Activated CD4-positive, alpha-beta T cell treated with anti-CD3 and anti-CD28 coated beads for 36 hours (primary cell): ENCODE measurements at regions of chr7 and their contacts with region 1.

Region 1: DNA sequence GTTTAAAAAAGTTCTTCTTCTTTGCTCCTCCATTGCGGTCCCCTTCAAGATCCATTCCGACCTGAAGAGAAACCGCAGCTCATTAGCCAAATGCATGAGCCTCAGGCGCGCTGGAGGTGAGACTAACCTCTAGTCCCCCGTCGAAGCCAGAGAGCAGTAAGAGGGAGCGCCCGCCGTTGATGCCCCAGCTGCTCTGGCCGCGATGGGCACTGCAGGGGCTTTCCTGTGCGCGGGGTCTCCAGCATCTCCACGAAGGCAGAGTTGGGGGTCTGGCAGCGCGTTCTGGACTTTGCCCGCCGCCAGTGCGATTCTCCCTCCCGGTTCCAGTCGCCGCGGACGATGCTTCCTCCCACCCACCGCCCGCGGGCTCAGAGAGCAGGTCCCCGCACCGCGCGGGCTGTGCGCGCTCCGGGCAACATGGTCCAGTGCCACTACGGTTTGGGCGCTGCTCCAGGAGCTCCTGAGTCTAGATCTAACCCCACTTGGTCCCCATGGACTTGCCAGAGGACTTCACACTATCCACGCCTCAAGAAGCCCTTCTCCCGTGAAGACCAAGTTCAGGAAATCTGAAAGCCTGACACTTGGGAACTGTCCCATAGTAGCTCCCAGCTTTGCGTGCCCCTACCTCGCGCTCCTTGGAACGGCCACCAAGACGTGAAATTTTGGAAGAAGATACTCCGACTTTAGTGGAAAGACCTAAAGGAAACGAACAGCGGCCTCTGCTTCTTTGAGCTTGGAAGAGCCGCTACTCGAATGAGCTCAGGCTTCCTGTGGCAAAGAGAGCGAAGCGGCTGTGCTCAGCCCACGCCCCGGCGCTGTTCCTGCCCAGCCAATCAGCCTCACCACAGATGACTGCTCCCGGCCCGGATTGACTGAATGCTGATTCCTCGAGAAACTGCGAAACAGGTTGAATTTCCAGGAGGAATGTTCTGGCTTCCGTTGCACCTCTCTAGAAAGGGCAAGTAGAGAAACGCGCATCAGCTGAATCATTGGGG is at the start of gene ABCB1:
- DNase-seq: peak; percentile 75
- ATAC-seq: peak; percentile 95
- H3K4me3 Mint-ChIP-seq: peak within 1 kb of the TSS; percentile 67
- H3K27ac Mint-ChIP-seq: peak within 1 kb of the TSS; percentile 77
- H3K4me1 Mint-ChIP-seq: peaks cover 20% of the 10 kb centered on the region
- H3K27me3 Mint-ChIP-seq: peaks cover 19% of the 10 kb centered on the region
- total RNA-seq, gene ABCB1: 4.5 to 4.9 TPM

Region 2: GRCh38 chr7:87574630-87575029 is 25.8 kb before region 1 on chr7:
- CTCF ChIA-PET with region 1: interaction called, 4 read pairs
- POLR2A ChIA-PET with region 1: interaction called, 3 read pairs
- intact Hi-C with region 1: loop called (anchors 2 kb)
- DNase-seq: peak; percentile 13
- ATAC-seq: peak; percentile 92
- H3K4me3 Mint-ChIP-seq: no peak overlapping the region
- H3K27ac Mint-ChIP-seq: peak overlapping the region; percentile 44
- H3K4me1 Mint-ChIP-seq: peaks cover 27% of the 10 kb centered on the region
- H3K27me3 Mint-ChIP-seq: no peaks in the 10 kb centered on the region